Activated T-helper 2 cell treated with anti-CD3 and anti-CD28 coated beads, Interferon-gamma antibody, Interleukin-2, Interleukin-4, amounts not matched to agents 10 μg/mL and 5 μg/mL and 100 μg/mL, durations not matched to agents 14 hours and 24 hours and 36 hours (primary cell): ENCODE measurements at regions of chr22 and their contacts with region 1.

Region 1: DNA sequence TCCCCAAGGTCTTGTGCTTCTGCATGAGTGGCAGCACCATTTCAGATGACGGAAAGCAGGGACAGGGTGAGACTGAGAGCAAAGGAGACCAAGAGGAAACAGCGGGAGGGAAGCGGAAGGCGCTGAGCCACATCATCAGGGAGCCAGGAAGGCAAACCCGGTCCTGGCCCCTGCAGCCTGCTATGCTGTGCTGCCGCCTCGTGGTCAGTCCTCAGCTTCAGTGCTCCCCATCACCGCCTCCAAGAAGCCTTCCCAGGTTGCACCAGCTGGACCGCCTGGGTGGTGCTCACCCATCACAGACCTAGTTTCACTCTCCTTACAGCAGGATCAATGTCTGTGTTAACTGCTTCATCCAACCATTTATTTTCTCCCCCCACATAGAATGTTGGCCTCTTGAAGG is 73.0 kb upstream of the PHF21B start:
- DNase-seq: no peak
- H3K4me3 Mint-ChIP-seq: no peak overlapping the region
- H3K27ac Mint-ChIP-seq: no peak overlapping the region
- H3K4me1 Mint-ChIP-seq: peaks cover 7% of the 10 kb centered on the region
- H3K27me3 Mint-ChIP-seq: peaks cover 2% of the 10 kb centered on the region

Region 2: DNA sequence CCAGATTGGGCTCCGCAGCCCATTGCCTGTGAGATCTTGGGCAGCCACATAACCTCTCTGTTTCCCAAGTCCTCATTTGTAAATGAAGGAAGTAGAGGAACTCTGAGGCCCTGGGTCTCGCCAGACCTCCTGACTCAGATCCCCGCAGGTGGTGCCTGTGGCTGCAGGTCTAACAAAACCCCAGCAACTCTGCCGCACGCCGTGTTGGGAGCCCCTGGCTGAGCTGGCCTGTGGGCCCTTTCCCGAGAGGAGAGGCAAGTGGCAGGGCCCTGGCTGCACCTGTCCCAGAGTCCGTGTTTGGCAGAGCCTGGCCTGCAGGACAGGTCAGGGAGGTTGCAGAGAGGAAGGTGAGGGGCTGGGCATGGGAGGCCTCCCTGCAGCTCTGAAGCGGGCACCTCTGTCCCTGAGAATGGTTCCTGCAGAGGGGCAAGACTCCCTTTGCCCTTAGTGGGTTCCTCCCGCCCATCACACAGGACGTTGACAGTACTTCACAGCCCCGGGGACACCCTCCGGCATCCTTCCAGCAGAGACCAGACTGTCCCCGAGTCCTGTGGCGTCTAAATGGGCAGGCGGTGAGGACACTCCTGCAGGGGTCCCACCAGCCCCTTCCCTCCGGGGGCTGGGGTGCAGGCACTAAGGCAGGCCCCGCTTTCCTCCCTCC is 262.7 kb before region 1 on chr22:
- intact Hi-C with region 1: loop called (anchors 5 kb)
- DNase-seq: no peak
- H3K4me3 Mint-ChIP-seq: no peak overlapping the region
- H3K27ac Mint-ChIP-seq: no peak overlapping the region
- H3K4me1 Mint-ChIP-seq: no peaks in the 10 kb centered on the region
- H3K27me3 Mint-ChIP-seq: no peaks in the 10 kb centered on the region

Region 3: DNA sequence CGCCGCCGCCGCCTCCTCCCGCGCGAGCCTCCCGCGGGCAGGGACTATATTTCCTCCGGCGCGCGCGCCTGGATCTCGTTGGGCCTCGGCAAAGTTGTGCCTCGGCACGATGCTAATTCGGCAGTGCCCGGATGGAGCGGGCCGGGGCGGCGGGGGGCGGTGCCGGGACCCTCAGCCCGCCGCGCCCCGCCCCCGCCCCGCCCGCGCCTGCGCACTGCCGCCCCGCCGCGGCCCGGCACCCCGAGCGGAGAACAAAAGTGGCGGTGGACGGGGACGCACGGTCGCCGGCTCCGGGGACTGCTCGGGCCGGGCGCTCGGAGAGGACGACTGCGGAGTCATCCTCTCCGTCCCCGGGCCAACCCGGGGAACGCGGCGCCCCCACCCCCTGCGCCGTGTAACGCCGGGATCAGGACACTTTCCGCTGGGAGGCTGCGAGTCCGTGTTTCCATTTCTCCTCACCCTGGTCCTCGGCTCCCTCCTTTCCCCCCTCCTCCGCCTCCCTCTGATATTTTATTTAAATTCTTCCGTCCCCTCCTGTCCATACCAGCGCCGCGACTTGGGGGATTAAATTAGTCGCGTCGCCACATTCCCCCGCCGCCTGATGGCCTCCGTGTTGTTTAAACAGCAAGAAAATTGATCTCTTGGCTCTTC is 72.8 kb before region 1 on chr22 and contains the start of gene PHF21B:
- intact Hi-C with region 1: loop called (anchors 5 kb)
- DNase-seq: no peak
- H3K4me3 Mint-ChIP-seq: peak within 1 kb of the TSS; percentile 82
- H3K27ac Mint-ChIP-seq: peak within 1 kb of the TSS; percentile 44
- H3K4me1 Mint-ChIP-seq: peaks cover 10% of the 10 kb centered on the region
- H3K27me3 Mint-ChIP-seq: peaks cover 47% of the 10 kb centered on the region
- total RNA-seq, gene PHF21B: 0.30 and 1.2 TPM in 2 replicates

Region 4: DNA sequence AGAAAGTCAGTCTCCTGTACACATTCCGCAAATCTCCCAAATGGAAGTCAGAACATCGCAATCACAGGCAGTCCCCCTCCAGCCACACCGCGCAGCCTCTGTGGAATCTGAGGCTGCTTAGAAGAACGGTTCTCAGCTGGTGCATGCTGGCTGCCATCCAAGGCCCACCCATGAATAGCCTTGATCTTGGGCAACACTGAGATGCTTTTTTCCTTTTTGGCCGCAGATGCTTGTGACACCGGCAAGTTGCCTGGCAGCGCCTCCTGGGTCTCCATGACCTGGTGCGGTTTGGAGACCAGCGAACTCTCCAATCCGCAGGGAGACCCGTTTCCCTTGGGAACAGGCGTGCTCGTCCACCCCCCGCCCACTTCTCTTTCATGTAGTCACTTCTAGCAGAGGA is 46.6 kb before region 1 on chr22:
- intact Hi-C with region 1: no loop called
- DNase-seq: no peak
- H3K4me3 Mint-ChIP-seq: no peak overlapping the region
- H3K27ac Mint-ChIP-seq: no peak overlapping the region
- H3K4me1 Mint-ChIP-seq: no peaks in the 10 kb centered on the region
- H3K27me3 Mint-ChIP-seq: no peaks in the 10 kb centered on the region